ENCODE measurements at regions of chr22 and their contacts with region 1.

Region 1: DNA sequence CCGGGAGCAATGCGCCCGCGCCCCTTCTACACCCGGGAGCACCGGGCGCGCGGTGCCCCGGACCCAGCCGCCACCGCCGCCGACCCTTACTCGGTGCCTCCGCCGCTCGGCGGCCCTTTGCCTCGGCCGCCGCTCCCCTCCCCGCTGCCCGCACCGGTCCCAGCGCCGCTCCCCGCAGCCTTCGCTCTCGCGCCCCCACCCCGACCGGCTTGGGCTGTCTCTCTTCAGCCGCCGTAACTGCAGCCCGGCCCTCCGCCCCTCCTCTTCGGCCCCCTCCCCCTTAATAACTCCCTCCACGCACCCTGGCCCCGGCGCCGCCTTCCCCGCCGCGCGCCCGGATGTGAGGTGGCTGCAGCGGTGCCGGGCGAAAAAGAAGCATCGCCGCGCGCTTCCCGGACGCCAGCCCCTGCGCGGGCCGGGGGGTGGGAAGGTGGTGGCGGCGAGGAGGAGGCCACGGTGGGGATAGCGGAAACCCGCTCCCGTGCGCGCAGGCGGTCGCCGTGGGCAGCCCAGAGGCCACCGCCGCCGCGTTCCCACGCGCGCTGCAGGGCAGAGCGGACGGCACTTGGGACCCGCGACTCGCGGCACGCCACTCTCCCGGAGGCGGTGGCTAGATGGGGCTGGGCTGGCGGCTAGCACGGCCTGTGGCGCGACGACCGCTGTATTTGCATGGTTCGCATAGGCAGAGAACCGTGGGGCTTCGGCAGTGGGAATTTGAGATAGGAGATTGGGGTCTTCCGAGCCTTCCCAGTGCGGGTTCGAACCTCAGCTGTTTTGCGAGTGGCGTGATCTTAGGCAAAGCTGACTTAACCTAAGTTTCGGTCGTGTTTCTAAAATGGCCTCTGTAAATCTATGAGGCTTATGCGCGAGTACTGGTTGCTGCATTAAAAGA is at the start of gene EIF4ENIF1:
- DNase-seq: peak; percentile 88 to 91 (median 89)
- H3K4me3 ChIP-seq: peak within 1 kb of the TSS; percentile 70 to 77
- H3K4me3 Mint-ChIP-seq: peak within 1 kb of the TSS; percentile 92 to 99 (median 96)
- H3K27ac ChIP-seq: peak within 1 kb of the TSS; percentile 87
- H3K27ac Mint-ChIP-seq: peak within 1 kb of the TSS; percentile 94 to 99 (median 96)
- H3K4me1 ChIP-seq: peaks cover 52% of the 10 kb centered on the region
- H3K4me1 Mint-ChIP-seq: peaks cover 29 to 54% (median 39%) of the 10 kb centered on the region in 4 donors
- H3K27me3 ChIP-seq: no peaks in the 10 kb centered on the region
- H3K27me3 Mint-ChIP-seq: no peaks in the 10 kb centered on the region
- total RNA-seq, gene EIF4ENIF1: 41.9 to 50.7 TPM

Region 2: GRCh38 chr22:31378123-31378522 is 111.7 kb before region 1 on chr22:
- CTCF ChIA-PET with region 1: no interaction called
- POLR2A ChIA-PET with region 1: no interaction called
- intact Hi-C with region 1: no loop called
- DNase-seq: no peak
- H3K4me3 ChIP-seq: no peak overlapping the region
- H3K4me3 Mint-ChIP-seq: no peak overlapping the region
- H3K27ac ChIP-seq: no peak overlapping the region
- H3K27ac Mint-ChIP-seq: no peak overlapping the region
- H3K4me1 ChIP-seq: no peaks in the 10 kb centered on the region
- H3K4me1 Mint-ChIP-seq: no peaks in the 10 kb centered on the region
- H3K27me3 ChIP-seq: no peaks in the 10 kb centered on the region
- H3K27me3 Mint-ChIP-seq: no peaks in the 10 kb centered on the region

Region 3: DNA sequence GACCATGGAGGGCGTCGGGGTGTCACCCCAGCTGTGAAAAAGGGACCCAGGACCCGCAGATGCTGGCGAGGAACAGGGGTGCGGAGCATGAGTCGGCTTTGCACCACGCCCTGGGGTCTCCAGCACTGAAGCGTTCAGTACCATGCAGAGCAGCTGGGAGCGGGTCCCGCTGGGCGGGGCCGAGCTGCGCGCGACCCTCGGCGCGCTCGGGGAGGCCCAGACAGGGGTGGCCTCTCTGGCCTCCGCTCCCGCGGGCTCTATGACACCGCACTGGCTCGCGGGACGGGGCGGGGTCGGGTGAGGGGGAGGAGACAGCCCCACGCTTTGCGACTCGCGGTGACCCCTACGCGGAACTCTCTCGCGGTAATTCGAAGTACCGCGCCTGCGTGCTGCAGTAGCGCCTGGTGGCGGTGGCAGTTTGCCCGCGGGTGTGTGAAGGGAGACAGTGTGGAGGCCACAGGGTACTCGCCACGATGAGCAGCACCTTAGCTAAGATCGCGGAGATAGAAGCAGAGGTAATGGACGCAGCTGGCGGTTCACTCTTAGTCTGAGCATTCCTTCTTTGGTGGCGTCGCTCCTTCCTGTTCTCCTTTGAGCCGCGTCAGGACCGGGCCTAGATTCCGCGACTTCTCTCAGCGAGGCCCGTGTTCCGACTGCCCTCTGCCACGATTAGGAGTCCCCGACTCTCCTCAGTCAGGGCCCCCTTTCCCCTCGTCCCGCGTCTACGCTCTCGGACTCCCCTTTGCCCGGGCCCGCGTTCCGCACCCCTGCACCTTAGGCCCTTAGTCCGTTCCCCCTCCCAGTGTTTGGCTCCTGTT is 90.4 kb before region 1 on chr22 and contains the start of gene DRG1:
- CTCF ChIA-PET with region 1: no interaction called
- POLR2A ChIA-PET with region 1: interaction called, 6 read pairs
- intact Hi-C with region 1: loop called (anchors 1 kb)
- DNase-seq: peak; percentile 93 to 95 (median 94)
- H3K4me3 ChIP-seq: peak within 1 kb of the TSS; percentile 87 to 97
- H3K4me3 Mint-ChIP-seq: peak within 1 kb of the TSS; percentile 95 to 97 (median 96)
- H3K27ac ChIP-seq: peak within 1 kb of the TSS; percentile 92
- H3K27ac Mint-ChIP-seq: peak within 1 kb of the TSS; percentile 90 to 98 (median 96)
- H3K4me1 ChIP-seq: peaks cover 26% of the 10 kb centered on the region
- H3K4me1 Mint-ChIP-seq: peaks cover 16 to 24% (median 20%) of the 10 kb centered on the region in 4 donors
- H3K27me3 ChIP-seq: no peaks in the 10 kb centered on the region
- H3K27me3 Mint-ChIP-seq: peaks cover under 1% of the 10 kb centered on the region in 2 donors
- total RNA-seq, gene DRG1: 80.3 to 82.5 TPM